ENCODE measurements at regions of chr3 and their contacts with region 1.

Region 1: GRCh38 chr3:194134757-194135528 is 1.0 kb upstream of the HES1 start:
- DNase-seq: peak in 1 of 2 donors; percentile 98
- H3K4me3 ChIP-seq: peak overlapping the region; percentile 54 to 63
- H3K27ac ChIP-seq: peak overlapping the region; percentile 86
- H3K4me1 ChIP-seq: peaks cover 41% of the 10 kb centered on the region
- H3K27me3 ChIP-seq: no peaks in the 10 kb centered on the region
- CTCF ChIP-seq: peak in 1 of 3 experiments; percentile 4
- POLR2A ChIP-seq: peak in 1 of 2 donors; percentile 38

Region 2: DNA sequence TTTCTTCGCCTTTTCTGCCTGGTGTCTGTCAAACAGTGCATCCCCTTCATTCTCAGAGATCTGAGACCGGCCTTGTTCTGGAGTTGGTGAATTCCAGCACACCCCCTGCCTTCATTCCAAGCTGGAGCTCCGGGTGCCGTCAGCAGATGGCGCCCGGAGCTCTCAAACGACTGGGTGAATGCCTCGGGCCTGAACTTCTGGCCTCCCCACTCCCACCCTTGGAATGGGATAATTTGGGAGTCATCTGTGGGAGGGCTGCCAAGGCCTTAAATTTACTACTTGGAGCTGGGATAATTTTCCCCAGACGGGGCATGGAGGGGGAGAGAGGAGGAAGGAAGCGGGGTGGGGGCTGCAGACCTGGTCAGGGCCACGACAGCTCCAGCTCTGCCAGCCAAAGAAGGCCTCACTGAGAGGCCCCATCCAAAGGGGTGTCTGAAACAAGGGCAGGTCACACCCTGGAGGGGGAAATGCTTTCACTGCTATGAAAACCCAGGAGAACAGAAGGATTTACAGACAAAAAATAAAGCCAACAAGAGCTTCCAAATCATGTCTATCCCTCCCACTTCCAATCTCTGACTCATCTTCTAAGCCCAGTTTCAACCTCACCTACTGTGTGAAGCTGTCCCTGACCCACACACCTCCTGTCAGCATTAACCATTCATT is 354.0 kb before region 1 on chr3:
- intact Hi-C with region 1: loop called (anchors 5 kb)
- DNase-seq: peak in 1 of 2 donors; percentile 92
- H3K4me3 ChIP-seq: no peak overlapping the region
- H3K27ac ChIP-seq: peak overlapping the region; percentile 43
- H3K4me1 ChIP-seq: peaks cover 31% of the 10 kb centered on the region
- H3K27me3 ChIP-seq: no peaks in the 10 kb centered on the region
- CTCF ChIP-seq: peak; percentile 42 to 87 (median 82)
- POLR2A ChIP-seq: no peak

Region 3: DNA sequence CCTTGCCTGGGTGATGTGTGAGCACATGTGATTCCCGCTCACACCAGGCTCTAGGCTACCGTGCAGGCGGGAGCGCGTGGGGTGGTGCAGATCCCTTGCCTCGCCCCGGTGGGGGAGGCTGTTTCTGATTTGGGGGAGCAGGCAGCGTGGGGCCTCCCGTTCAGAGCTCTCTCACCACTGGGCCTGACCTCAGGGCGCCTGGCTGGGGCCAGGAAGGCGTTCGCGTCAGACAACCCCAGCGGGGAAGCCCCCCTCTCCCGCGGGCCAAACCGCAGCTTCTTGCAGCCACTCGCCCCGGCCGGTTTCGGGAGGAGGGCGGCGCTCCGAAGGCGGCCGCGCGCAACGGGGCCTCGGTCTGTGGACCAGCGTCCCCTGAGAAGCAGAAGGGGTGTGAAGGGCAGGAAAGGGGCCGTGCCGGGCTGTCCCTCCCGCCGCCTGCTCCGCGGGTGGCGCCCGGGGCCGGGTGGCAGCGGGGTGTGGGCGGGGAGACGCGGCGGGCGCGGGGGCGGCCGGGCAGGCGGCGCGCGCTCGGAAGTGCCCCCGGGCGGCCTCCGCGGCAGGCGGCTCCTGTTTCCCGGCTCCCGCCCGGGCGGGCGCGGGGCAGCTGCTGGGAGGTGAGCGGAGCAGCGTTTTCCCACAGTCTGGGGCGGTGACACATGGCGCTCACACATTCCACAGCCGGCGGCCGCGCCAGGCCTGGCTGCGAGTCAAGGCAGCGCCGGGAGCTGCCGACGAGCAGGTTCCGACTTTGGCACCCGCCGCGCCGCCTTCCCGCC is 64.1 kb before region 1 on chr3:
- intact Hi-C with region 1: loop called (anchors 10 kb)
- DNase-seq: no peak
- H3K4me3 ChIP-seq: peak overlapping the region; percentile 43 to 63
- H3K27ac ChIP-seq: peak overlapping the region; percentile 44
- H3K4me1 ChIP-seq: peaks cover 19% of the 10 kb centered on the region
- H3K27me3 ChIP-seq: no peaks in the 10 kb centered on the region
- CTCF ChIP-seq: no peak
- POLR2A ChIP-seq: no peak

Region 4: DNA sequence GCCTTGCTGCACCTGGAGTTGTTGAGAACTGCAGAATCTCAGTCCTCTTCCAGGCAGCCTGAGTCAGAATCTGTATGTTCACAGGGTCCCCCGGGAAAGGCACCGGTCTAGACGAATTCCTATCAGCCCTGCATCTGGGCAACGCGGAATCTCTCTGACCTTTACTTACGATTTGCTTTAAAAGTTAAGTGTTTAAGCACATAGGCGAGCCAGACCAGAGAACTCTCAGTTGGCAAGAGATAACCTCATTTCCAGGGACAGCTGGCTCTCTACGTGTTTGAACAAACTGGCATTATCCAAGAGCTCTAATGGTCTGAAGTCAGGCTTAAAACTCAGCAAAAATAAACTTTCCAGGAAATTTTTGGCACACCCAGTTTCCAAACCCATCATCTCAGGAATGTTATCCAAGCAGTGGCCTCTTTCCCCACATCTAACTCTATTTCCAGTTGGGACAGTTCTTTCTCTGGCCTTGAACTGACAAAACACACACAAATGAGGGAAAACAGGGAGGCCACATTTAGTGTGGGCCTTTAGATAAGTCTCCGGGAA is 54.4 kb after region 1 on chr3:
- intact Hi-C with region 1: no loop called
- DNase-seq: no peak
- H3K4me3 ChIP-seq: no peak overlapping the region
- H3K27ac ChIP-seq: no peak overlapping the region
- H3K4me1 ChIP-seq: no peaks in the 10 kb centered on the region
- H3K27me3 ChIP-seq: no peaks in the 10 kb centered on the region
- CTCF ChIP-seq: no peak
- POLR2A ChIP-seq: no peak

Region 5: GRCh38 chr3:194315088-194315964 is 180.4 kb after region 1 on chr3:
- intact Hi-C with region 1: loop called (anchors 2 kb)
- DNase-seq: peak in 1 of 2 donors; percentile 96
- H3K4me3 ChIP-seq: peak overlapping the region; percentile 41 to 46
- H3K27ac ChIP-seq: peak overlapping the region; percentile 63
- H3K4me1 ChIP-seq: peaks cover 45% of the 10 kb centered on the region
- H3K27me3 ChIP-seq: no peaks in the 10 kb centered on the region
- CTCF ChIP-seq: peak; percentile 48 to 97 (median 90)
- POLR2A ChIP-seq: no peak

Measured in vagina (tissue), 2 donors.